Activated CD4-positive, alpha-beta T cell treated with anti-CD3 and anti-CD28 coated beads for 36 hours (primary cell): ENCODE measurements at regions of chr3 and their contacts with region 1.

Region 1: GRCh38 chr3:123375014-123375940 is 73.6 kb downstream of the ADCY5 start:
- DNase-seq: no peak
- ATAC-seq: no peak
- H3K4me3 Mint-ChIP-seq: no peak overlapping the region
- H3K27ac Mint-ChIP-seq: no peak overlapping the region
- H3K4me1 Mint-ChIP-seq: no peaks in the 10 kb centered on the region
- H3K27me3 Mint-ChIP-seq: peaks cover 7% of the 10 kb centered on the region

Region 2: DNA sequence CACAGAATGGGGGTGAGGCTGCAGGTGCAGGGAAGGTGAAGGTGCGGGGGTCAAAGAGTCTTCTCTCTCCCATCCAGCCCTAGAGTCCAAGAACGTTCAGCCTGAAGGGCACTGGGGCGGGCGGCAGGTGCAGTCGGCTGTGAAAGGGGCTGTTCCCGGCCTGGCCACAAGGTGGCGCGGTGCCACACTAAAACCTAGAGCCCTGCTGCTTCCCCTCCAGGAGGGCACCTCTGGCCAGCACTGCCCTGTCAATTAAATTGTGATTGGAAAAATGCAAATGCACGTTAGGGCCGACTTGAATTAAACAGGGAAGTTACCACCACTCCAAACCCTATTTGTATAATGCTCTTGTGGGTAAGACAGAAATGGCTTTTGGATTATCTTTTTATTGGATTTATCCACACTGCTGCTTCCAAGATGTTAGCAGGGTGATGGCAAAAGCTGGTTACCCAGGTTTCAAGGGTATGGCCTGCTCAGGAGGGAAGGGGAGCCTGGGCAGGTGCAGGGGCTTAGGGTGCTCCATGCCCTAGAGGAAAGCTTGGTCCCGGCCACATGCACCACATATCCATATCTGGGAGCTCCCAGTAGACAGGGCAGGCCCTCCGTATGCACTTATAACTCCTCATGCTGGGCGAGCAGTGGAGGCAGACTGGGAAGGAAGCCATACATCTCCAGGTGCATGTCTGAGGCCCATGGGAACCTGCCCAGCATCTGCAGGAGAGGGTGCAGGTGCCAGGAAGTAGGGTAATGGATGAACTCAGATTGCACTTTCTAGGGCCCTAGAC is 46.2 kb before region 1 on chr3:
- CTCF ChIA-PET with region 1: interaction called, 9 read pairs
- POLR2A ChIA-PET with region 1: no interaction called
- intact Hi-C with region 1: loop called in 1 of 2 experiments (anchors 2 kb)
- DNase-seq: peak; percentile 86
- ATAC-seq: peak; percentile 90
- H3K4me3 Mint-ChIP-seq: no peak overlapping the region
- H3K27ac Mint-ChIP-seq: no peak overlapping the region
- H3K4me1 Mint-ChIP-seq: no peaks in the 10 kb centered on the region
- H3K27me3 Mint-ChIP-seq: peaks cover 3% of the 10 kb centered on the region